Heart right ventricle (tissue), 16 donors: ENCODE measurements at regions of chr11 and their contacts with region 1.

Region 1: GRCh38 chr11:32893343-32894148 is 935 bp downstream of the QSER1 start:
- DNase-seq: peak; percentile 30 to 40
- ATAC-seq: peak; percentile 39 to 78 (median 66)
- H3K4me3 ChIP-seq: peak overlapping the region; percentile 84 to 99 (median 94)
- H3K27ac ChIP-seq: peak overlapping the region; percentile 88 to 98 (median 95)
- H3K4me1 ChIP-seq: peaks cover 2 to 34% (median 19%) of the 10 kb centered on the region in 9 donors
- H3K27me3 ChIP-seq: no peaks in the 10 kb centered on the region
- CTCF ChIP-seq: peak in 8 of 9 donors; percentile 17 to 69 (median 47)

Region 2: DNA sequence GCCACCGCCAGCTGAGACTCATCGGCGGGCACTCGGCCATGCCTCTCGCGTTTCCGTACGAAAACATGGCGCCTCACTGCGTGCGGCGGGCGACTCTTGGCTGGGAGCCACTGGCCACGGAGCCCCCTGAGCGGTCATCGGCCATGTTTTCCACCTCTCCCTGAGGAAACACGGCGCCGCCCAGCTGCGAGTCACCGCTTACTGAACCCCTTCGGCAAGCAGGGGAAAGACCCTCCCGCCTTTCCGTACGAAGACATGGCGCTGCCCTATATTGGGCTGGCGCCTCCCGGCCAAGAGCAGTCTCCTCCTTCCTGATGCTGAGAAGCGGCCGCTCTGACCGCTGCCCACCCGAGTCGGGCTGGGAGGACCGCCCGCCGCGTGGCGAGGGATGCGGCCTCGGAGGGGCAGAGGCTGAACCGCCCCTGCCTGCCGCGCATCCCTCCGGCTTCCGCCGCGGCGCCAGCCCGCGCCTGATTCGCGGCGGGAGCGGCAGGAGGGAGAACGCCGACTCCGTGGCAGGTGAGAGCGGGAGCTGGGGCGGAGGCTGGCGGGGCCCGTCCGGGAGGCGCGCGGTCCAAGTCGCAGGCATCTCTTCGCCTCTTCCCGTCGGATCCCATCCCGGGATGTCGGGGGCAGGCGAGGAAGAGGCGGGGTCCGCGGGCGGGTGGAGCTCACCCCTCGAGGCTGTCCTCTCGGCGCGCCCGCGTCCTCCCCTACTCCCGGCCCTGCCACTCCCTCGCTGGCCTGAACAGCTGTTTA is 145.9 kb after region 1 on chr11 and contains the start of gene TCP11L1:
- intact Hi-C with region 1: loop called in 3 of 10 experiments (anchors 5 to 10 kb)
- DNase-seq: peak; percentile 93 to 96
- ATAC-seq: peak; percentile 91 to 98 (median 94)
- H3K4me3 ChIP-seq: peak within 1 kb of the TSS; percentile 56 to 97 (median 80)
- H3K27ac ChIP-seq: peak within 1 kb of the TSS; percentile 83 to 100 (median 98)
- H3K4me1 ChIP-seq: peaks cover 0 to 18% (median 12%) of the 10 kb centered on the region in 9 donors
- H3K27me3 ChIP-seq: no peaks in the 10 kb centered on the region
- CTCF ChIP-seq: peak in 2 of 9 donors; percentile 3 to 19
- total RNA-seq, gene TCP11L1: 5.0 to 9.2 (median 6.5) TPM